ENCODE measurements at regions of chr15 and their contacts with region 1.

Region 1: GRCh38 chr15:52689562-52689961 is 10.4 kb upstream of the ATOSA start:
- DNase-seq: no peak
- ATAC-seq: peak in 1 of 4 donors; percentile 22
- H3K4me3 ChIP-seq: no peak overlapping the region
- H3K27ac ChIP-seq: no peak overlapping the region
- H3K4me1 ChIP-seq: no peaks in the 10 kb centered on the region
- H3K27me3 ChIP-seq: no peaks in the 10 kb centered on the region
- CTCF ChIP-seq: no peak

Region 2: DNA sequence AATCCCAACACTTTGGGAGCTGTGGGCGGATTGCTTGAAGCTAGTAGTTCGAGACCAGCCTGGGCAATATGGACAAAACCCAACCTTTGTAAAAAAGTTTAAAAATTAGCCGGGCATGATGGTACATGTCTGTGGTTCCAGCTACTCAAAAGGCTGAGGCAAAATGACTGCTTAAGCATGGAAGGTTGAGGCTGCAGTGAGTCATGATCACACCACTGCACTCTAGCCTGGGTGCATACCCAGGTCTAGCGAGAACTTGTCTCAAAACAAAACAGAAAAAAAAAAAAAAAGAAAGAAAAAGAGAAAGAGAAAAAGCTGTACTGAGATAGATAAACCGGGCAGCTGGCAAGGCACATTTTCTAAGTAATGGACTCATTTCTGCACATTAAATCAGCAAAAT is 131.4 kb before region 1 on chr15:
- intact Hi-C with region 1: no loop called
- DNase-seq: no peak
- ATAC-seq: peak; percentile 50 to 75 (median 66)
- H3K4me3 ChIP-seq: peak overlapping the region; percentile 63
- H3K27ac ChIP-seq: peak overlapping the region; percentile 79
- H3K4me1 ChIP-seq: peaks cover 65% of the 10 kb centered on the region
- H3K27me3 ChIP-seq: no peaks in the 10 kb centered on the region
- CTCF ChIP-seq: no peak

Region 3: DNA sequence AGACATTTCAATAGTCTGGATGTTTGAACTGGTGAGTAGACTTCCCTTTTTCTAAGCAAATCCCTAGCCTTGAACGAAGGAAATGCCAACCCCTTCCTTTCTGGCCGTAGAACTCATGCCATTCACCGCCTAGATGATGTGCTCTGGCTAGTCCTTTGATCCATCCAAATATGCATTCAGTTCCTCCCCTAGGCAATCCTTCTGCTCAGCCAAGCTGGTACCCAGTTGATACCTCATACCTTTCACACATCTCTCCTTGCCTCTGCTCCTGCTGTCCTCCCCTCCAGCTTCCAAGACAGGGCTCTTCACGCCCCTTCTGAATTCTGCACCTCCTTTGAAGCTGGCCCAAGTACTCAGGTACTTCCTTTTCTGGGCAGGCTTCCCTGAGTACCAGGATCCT is 30.1 kb after region 1 on chr15:
- intact Hi-C with region 1: loop called in 1 of 2 experiments (anchors 5 kb)
- DNase-seq: no peak
- ATAC-seq: no peak
- H3K4me3 ChIP-seq: no peak overlapping the region
- H3K27ac ChIP-seq: no peak overlapping the region
- H3K4me1 ChIP-seq: no peaks in the 10 kb centered on the region
- H3K27me3 ChIP-seq: no peaks in the 10 kb centered on the region
- CTCF ChIP-seq: no peak